Psoas muscle (tissue), 8 donors: ENCODE measurements at regions of chr12 and their contacts with region 1.

Region 1: DNA sequence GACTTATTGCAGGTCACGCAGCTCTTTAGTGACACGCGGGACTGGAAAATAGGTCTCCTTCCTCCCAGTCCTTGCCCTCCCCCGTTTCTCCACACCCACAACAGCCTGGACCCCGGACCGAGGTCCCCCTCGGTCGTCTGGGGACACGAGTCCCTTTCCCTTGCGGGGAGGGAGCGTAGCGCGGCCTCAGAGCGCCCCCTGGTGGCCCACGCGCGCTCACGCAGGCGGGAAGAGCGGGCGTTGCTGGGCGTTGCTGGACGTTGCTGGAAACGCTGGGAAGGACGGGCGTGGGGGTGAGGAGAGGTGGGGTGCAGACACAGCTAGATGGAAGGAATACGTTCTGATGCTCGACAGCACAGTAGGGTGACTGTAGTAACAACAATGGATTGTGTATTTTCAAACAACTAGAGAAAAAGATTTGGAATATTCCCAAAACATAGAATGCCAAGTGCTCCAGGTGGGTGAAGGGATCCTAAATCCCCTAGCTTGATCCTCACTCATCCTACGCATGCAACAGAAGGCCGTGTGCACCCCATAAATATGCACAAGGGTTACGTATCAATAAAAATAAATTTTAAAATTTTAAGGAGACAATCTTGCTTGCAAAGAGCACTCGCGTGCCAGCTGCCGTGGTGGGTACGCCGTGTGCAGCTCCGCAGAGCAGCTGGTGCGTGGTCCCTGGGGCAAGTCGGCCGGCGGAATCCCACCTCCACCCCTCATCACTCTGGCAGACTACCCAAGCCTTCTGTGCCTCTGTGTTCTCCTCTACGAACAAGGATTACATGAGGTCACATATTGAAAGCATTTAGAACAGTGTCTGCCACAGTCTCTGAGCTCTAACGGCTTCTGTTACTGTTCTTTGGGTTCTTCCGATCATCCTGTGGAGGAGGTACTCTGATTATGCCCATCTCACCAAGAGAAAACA is 87.4 kb downstream of the B4GALNT3 start:
- DNase-seq: peak; percentile 67 to 83
- ATAC-seq: peak; percentile 82 to 91 (median 85)
- H3K4me3 ChIP-seq: peak overlapping the region; percentile 25
- H3K27ac ChIP-seq: no peak overlapping the region
- H3K4me1 ChIP-seq: peaks cover 3% of the 10 kb centered on the region
- H3K27me3 ChIP-seq: peaks cover 0 to 4% (median 0%) of the 10 kb centered on the region in 3 donors
- CTCF ChIP-seq: peak; percentile 98

Region 2: GRCh38 chr12:442235-442884 is 104.8 kb before region 1 on chr12:
- intact Hi-C with region 1: loop called (anchors 2 kb)
- DNase-seq: no peak
- ATAC-seq: peak in 2 of 4 donors; percentile 61 to 72
- H3K4me3 ChIP-seq: no peak overlapping the region
- H3K27ac ChIP-seq: no peak overlapping the region
- H3K4me1 ChIP-seq: no peaks in the 10 kb centered on the region
- H3K27me3 ChIP-seq: no peaks in the 10 kb centered on the region
- CTCF ChIP-seq: peak; percentile 79

Region 3: GRCh38 chr12:503111-503761 is 43.9 kb before region 1 on chr12:
- intact Hi-C with region 1: loop called in 1 of 2 experiments (anchors 2 kb)
- DNase-seq: no peak
- ATAC-seq: peak; percentile 61 to 78 (median 72)
- H3K4me3 ChIP-seq: no peak overlapping the region
- H3K27ac ChIP-seq: peak overlapping the region; percentile 81
- H3K4me1 ChIP-seq: peaks cover 20% of the 10 kb centered on the region
- H3K27me3 ChIP-seq: no peaks in the 10 kb centered on the region
- CTCF ChIP-seq: no peak

Region 4: GRCh38 chr12:614411-614970 is 67.3 kb after region 1 on chr12:
- intact Hi-C with region 1: no loop called
- DNase-seq: no peak
- ATAC-seq: peak in 3 of 4 donors; percentile 20 to 33 (median 22)
- H3K4me3 ChIP-seq: no peak overlapping the region
- H3K27ac ChIP-seq: peak overlapping the region; percentile 86
- H3K4me1 ChIP-seq: peaks cover 49% of the 10 kb centered on the region
- H3K27me3 ChIP-seq: no peaks in the 10 kb centered on the region
- CTCF ChIP-seq: no peak